ENCODE measurements at regions of chr11 and their contacts with region 1.

Region 1: GRCh38 chr11:121655537-121656327 is 203.0 kb upstream of the SORL1-AS1 start:
- DNase-seq: peak; percentile 79
- ATAC-seq: peak; percentile 86
- H3K4me3 Mint-ChIP-seq: peak overlapping the region; percentile 73
- H3K27ac Mint-ChIP-seq: peak overlapping the region; percentile 74
- H3K4me1 Mint-ChIP-seq: peaks cover 16% of the 10 kb centered on the region
- H3K27me3 Mint-ChIP-seq: no peaks in the 10 kb centered on the region
- CTCF ChIP-seq: peak; percentile 89

Region 2: DNA sequence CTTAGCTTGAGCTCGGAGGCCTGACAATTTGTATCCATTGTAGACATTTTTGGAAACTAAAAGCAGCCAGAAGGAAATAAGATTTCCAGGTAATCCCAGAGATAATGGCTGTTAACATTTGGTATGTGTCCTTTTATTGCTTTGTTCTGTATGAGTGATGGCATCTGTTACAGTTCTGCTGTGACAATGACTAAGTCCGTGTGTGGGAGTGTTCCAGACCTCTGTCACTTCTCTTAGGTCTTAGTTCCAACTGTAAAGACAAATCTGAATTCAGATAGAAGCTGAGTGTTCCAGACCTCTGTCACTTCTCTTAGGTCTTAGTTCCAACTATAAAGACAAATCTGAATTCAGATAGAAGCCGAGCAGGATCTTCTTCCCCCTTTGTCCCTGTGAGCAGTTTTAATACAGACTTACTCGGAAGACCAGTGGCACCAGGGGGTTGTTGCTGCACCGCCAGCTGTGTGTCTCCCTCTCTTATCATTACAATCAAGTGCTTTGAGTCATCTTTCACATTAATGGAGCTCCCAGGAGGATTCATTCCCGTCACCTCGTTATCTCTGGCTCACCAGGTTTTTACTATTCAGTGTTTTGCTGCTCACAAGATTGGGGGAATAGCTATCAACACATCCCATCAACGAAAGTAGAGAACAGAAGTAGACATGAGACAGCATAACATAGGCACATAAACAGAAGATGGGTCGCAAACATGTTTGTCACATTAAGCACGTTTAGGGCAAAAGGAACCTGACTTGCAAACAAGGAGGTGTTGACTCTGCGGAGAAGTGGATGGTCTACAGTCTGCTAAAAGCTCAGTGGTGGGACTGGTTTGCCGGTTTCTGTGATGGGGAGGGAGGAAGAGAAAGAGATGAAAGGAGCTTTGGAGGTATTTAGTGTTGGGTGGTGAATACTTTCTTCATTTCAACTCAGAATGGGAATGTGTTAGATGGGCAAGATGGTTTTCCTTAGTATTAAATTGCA is 11.9 kb before region 1 on chr11:
- CTCF ChIA-PET with region 1: interaction called, 22 read pairs
- POLR2A ChIA-PET with region 1: interaction called, 3 read pairs
- intact Hi-C with region 1: no loop called
- DNase-seq: no peak
- ATAC-seq: no peak
- H3K4me3 Mint-ChIP-seq: no peak overlapping the region
- H3K27ac Mint-ChIP-seq: no peak overlapping the region
- H3K4me1 Mint-ChIP-seq: no peaks in the 10 kb centered on the region
- H3K27me3 Mint-ChIP-seq: no peaks in the 10 kb centered on the region
- CTCF ChIP-seq: no peak

Region 3: DNA sequence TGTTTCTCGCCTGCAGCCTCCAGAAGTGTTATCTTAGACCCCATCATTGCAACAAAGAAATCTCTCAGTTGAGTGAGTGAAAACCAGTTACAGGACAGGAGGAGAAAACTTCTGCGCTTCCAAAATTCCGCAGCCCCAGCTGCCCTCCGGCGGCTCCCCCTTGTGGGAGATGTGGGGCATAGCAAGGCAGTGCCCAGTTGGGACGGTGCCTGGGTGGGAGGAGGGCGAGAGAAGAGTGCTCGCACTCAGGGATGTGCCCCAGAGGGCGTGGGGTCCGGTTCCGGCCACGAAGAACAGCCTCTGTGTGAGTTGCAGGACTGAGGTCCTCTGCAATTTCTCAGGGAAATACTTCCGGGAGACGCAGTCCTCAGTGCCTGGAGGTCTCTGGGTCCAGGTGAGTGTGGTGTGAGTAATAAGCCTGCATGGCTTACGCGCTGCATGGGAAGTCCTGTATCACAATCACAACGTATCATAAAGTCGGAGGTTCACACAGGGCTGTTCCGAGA is 547.3 kb after region 1 on chr11:
- CTCF ChIA-PET with region 1: interaction called, 29 read pairs
- POLR2A ChIA-PET with region 1: no interaction called
- intact Hi-C with region 1: loop called (anchors 5 kb)
- DNase-seq: peak; percentile 48
- ATAC-seq: peak; percentile 80
- H3K4me3 Mint-ChIP-seq: no peak overlapping the region
- H3K27ac Mint-ChIP-seq: no peak overlapping the region
- H3K4me1 Mint-ChIP-seq: no peaks in the 10 kb centered on the region
- H3K27me3 Mint-ChIP-seq: peaks cover 31% of the 10 kb centered on the region
- CTCF ChIP-seq: peak; percentile 92

Region 4: DNA sequence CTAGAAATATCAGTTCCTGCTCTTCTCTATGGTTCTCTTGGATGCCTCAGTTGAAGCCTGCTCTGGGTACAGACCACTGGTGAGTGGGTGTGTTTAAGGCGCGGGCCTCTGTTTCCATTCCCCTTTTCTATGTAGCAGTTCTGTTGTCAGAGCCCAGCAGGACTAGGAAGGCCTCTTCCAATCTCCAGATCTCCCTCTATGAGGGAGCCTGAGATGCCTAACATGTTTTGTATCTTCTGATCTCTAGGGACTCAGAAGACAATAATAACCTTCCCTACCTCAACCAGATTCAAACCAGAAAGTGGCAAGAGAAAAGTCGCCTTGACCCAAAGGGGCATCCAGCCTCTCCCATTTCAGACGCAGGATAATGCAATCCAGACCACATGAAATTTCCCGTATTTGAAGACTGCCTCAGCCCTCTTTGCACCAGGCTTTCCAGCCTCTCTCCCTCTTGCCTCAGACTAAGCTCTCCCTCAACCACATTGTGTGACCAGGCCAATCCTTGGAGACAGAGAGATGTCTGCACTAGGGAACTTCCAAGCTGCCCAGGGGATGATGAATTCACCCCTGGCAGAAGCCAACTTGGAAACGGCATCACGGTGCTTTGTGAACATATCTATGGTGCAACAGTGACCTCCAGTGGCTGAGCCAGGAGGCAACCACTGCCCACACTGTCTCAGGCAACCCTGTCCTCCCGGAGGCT is 849.7 kb after region 1 on chr11:
- CTCF ChIA-PET with region 1: interaction called, 5 read pairs
- POLR2A ChIA-PET with region 1: no interaction called
- intact Hi-C with region 1: loop called (anchors 5 kb)
- DNase-seq: peak; percentile 69
- ATAC-seq: peak; percentile 80
- H3K4me3 Mint-ChIP-seq: no peak overlapping the region
- H3K27ac Mint-ChIP-seq: no peak overlapping the region
- H3K4me1 Mint-ChIP-seq: no peaks in the 10 kb centered on the region
- H3K27me3 Mint-ChIP-seq: peaks cover 33% of the 10 kb centered on the region
- CTCF ChIP-seq: peak; percentile 67